Activated naive CD4-positive, alpha-beta T cell treated with anti-CD3 and anti-CD28 coated beads for 36 hours (primary cell): ENCODE measurements at regions of chr2 and their contacts with region 1.

Region 1: GRCh38 chr2:85826990-85827878 is 61.6 kb downstream of the ST3GAL5 start:
- DNase-seq: peak; percentile 88
- H3K4me3 Mint-ChIP-seq: peak overlapping the region; percentile 6
- H3K27ac Mint-ChIP-seq: no peak overlapping the region
- H3K4me1 Mint-ChIP-seq: peaks cover 11% of the 10 kb centered on the region
- H3K27me3 Mint-ChIP-seq: no peaks in the 10 kb centered on the region

Region 2: GRCh38 chr2:85772841-85773491 is 54.3 kb before region 1 on chr2:
- CTCF ChIA-PET with region 1: no interaction called
- intact Hi-C with region 1: no loop called
- DNase-seq: no peak
- H3K4me3 Mint-ChIP-seq: no peak overlapping the region
- H3K27ac Mint-ChIP-seq: no peak overlapping the region
- H3K4me1 Mint-ChIP-seq: no peaks in the 10 kb centered on the region
- H3K27me3 Mint-ChIP-seq: peaks cover 19% of the 10 kb centered on the region

Region 3: GRCh38 chr2:85813982-85814801 is 13.0 kb before region 1 on chr2:
- CTCF ChIA-PET with region 1: interaction called, 25 read pairs
- intact Hi-C with region 1: no loop called
- DNase-seq: peak; percentile 92
- H3K4me3 Mint-ChIP-seq: no peak overlapping the region
- H3K27ac Mint-ChIP-seq: no peak overlapping the region
- H3K4me1 Mint-ChIP-seq: no peaks in the 10 kb centered on the region
- H3K27me3 Mint-ChIP-seq: peaks cover 1% of the 10 kb centered on the region

Region 4: GRCh38 chr2:85852937-85853498 is 25.8 kb after region 1 on chr2:
- CTCF ChIA-PET with region 1: interaction called, 7 read pairs
- intact Hi-C with region 1: loop called (anchors 1 kb)
- DNase-seq: peak; percentile 70
- H3K4me3 Mint-ChIP-seq: peak overlapping the region; percentile 74
- H3K27ac Mint-ChIP-seq: peak overlapping the region; percentile 98
- H3K4me1 Mint-ChIP-seq: peaks cover 70% of the 10 kb centered on the region
- H3K27me3 Mint-ChIP-seq: no peaks in the 10 kb centered on the region

Region 5: GRCh38 chr2:86079981-86080911 is 253.0 kb after region 1 on chr2:
- CTCF ChIA-PET with region 1: interaction called, 117 read pairs
- intact Hi-C with region 1: loop called (anchors 1 kb)
- DNase-seq: peak; percentile 91
- H3K4me3 Mint-ChIP-seq: no peak overlapping the region
- H3K27ac Mint-ChIP-seq: no peak overlapping the region
- H3K4me1 Mint-ChIP-seq: peaks cover 16% of the 10 kb centered on the region
- H3K27me3 Mint-ChIP-seq: no peaks in the 10 kb centered on the region

Region 6: GRCh38 chr2:86368161-86368824 is 541.1 kb after region 1 on chr2:
- CTCF ChIA-PET with region 1: no interaction called
- intact Hi-C with region 1: loop called (anchors 5 kb)
- DNase-seq: peak; percentile 46
- H3K4me3 Mint-ChIP-seq: peak overlapping the region; percentile 66
- H3K27ac Mint-ChIP-seq: peak overlapping the region; percentile 64
- H3K4me1 Mint-ChIP-seq: peaks cover 48% of the 10 kb centered on the region
- H3K27me3 Mint-ChIP-seq: no peaks in the 10 kb centered on the region